IMR-90 (cell line): ENCODE measurements at regions of chr7 and their contacts with region 1.

Region 1: DNA sequence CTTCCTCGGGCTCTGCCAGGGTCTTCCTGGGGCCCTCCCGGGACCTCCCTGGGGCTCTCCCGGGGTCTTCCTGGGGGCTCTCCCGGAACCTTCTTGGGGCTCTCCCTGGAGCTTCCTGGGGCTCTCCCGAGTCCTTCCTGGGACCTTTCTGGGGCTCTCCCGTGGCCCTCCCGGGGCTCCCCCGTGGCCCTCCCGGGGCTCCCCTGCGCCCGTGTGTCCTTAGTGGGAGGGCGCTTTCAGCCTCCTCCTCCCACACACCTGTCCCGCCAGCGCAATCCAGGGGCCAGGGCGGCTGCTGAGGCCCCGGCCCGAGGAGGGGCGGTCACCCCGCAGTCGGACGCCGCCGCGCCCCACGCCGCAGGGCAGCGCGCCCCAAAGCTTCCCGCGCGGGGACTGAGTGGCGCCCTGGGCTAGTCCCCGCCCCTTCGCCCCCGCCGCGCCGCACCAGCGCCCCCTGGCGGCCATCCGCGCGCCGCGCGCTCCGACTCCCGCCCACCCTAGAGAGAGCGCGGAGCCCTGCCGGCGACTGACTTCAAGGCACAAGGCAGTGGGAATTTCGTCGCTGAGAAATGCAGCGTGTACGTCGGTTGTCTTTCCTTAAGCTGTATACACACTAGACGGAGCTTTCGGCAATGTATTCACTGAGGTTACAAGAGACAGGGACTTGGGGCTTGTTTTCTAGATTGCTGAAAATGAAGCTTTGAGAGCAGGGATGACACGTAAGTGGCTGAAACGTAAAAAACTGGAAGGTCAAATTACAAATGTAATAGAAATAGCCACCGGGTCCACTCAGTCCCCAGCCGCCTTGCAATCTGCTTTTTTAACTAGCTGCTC is 47.1 kb downstream of the INSIG1 start:
- DNase-seq: peak; percentile 64
- ATAC-seq: peak; percentile 99
- H3K4me3 ChIP-seq: peak overlapping the region; percentile 36
- H3K27ac ChIP-seq: no peak overlapping the region
- H3K4me1 ChIP-seq: no peaks in the 10 kb centered on the region
- H3K27me3 ChIP-seq: peaks cover 4% of the 10 kb centered on the region
- CTCF ChIP-seq: peak; percentile 94
- POLR2A ChIP-seq: no peak
- RAD21 ChIP-seq: peak; percentile 82

Region 2: GRCh38 chr7:154913638-154914312 is 431.0 kb before region 1 on chr7:
- CTCF ChIA-PET with region 1: interaction called, 5 read pairs
- POLR2A ChIA-PET with region 1: no interaction called
- dilution Hi-C with region 1: no loop called
- in situ Hi-C with region 1: no loop called
- intact Hi-C with region 1: loop called (anchors 1 kb)
- DNase-seq: peak; percentile 51
- ATAC-seq: peak; percentile 98
- H3K4me3 ChIP-seq: no peak overlapping the region
- H3K27ac ChIP-seq: no peak overlapping the region
- H3K4me1 ChIP-seq: no peaks in the 10 kb centered on the region
- H3K27me3 ChIP-seq: peaks cover 12% of the 10 kb centered on the region; the same call in 1 of the 2 replicates
- CTCF ChIP-seq: peak; percentile 78
- POLR2A ChIP-seq: no peak
- RAD21 ChIP-seq: peak; percentile 80

Region 3: GRCh38 chr7:155003376-155004214 is 341.2 kb before region 1 on chr7:
- CTCF ChIA-PET with region 1: no interaction called
- POLR2A ChIA-PET with region 1: no interaction called
- dilution Hi-C with region 1: no loop called
- in situ Hi-C with region 1: no loop called
- intact Hi-C with region 1: loop called (anchors 10 kb)
- DNase-seq: peak; percentile 71
- ATAC-seq: peak; percentile 94
- H3K4me3 ChIP-seq: peak overlapping the region; percentile 80
- H3K27ac ChIP-seq: peak overlapping the region; percentile 81
- H3K4me1 ChIP-seq: 0 out of 2 replicates have a peak, but pooled peaks cover 1% of the 10 kb centered on the region
- H3K27me3 ChIP-seq: no peaks in the 10 kb centered on the region
- CTCF ChIP-seq: no peak
- POLR2A ChIP-seq: no peak; the same call in 1 of the 2 replicates
- RAD21 ChIP-seq: no peak

Region 4: DNA sequence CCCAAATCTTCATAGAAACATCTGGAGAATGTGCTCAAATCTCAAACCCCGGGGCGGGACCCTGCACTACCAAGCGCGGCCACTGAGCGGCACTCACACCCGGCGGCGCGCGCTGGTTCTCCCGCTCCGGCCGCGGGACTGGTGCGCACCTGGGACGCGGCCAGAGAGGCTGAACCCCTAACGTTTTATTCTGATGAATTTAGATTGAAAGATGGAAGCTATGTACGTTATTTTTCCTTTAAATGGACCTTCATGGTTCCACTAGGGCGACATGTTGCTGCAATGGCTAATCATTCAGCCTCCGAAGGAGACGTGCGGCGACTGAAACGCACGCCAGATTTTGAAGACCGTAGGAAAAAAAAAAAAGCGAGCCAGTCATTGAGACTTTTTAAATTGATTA is 154.1 kb before region 1 on chr7:
- CTCF ChIA-PET with region 1: interaction called, 5 read pairs
- POLR2A ChIA-PET with region 1: no interaction called
- dilution Hi-C with region 1: no loop called
- in situ Hi-C with region 1: loop called (anchors 10 kb)
- intact Hi-C with region 1: loop called (anchors 1 kb)
- DNase-seq: no peak
- ATAC-seq: peak; percentile 97
- H3K4me3 ChIP-seq: no peak overlapping the region
- H3K27ac ChIP-seq: no peak overlapping the region
- H3K4me1 ChIP-seq: no peaks in the 10 kb centered on the region
- H3K27me3 ChIP-seq: peaks cover 2% of the 10 kb centered on the region
- CTCF ChIP-seq: peak; percentile 83
- POLR2A ChIP-seq: no peak
- RAD21 ChIP-seq: peak; percentile 94

Region 5: DNA sequence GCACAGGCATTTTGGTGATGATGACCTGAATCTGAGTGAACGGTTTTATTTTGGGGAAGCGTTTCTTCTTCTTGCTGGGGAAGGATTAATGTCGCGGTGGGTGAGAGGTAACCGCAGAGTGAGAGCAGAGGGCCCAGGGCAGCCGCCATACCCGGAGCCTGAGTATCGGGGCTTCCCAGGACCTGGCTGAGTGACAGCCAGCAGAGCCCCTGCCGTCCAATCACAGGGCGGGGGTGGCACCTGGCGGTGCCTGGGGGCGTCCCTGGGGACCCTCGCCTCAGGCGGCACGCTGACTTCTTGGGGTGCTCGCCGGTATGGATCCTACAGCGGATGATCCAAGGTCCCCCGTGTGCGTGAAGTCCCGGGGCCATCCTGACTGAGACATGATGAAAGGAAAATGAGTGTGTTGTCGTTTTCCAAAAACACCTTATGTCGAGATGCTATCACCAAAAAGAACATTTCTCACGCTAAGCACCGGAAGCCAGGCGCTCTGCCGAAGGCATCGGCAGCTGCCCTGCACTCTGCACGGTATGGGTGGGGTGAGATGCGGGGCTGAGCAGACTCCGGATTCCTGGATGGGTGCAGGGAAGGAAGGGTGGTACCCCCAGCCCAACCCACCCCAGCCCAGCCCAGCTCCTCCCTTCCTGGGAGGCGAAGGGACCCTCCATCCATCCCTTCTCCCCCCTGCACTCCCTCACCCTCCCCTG is 695.3 kb after region 1 on chr7:
- CTCF ChIA-PET with region 1: no interaction called
- POLR2A ChIA-PET with region 1: no interaction called
- dilution Hi-C with region 1: no loop called
- in situ Hi-C with region 1: no loop called
- intact Hi-C with region 1: no loop called
- DNase-seq: no peak
- ATAC-seq: no peak
- H3K4me3 ChIP-seq: no peak overlapping the region
- H3K27ac ChIP-seq: no peak overlapping the region
- H3K4me1 ChIP-seq: no peaks in the 10 kb centered on the region
- H3K27me3 ChIP-seq: no peaks in the 10 kb centered on the region
- CTCF ChIP-seq: no peak
- POLR2A ChIP-seq: no peak
- RAD21 ChIP-seq: no peak